Common myeloid progenitor, CD34-positive (primary cell): ENCODE measurements at regions of chr4 and their contacts with region 1.

Region 1: GRCh38 chr4:102610007-102610406 is 108.8 kb downstream of the NFKB1 start:
- DNase-seq: peak in 2 of 3 donors; percentile 36 to 40
- H3K4me3 ChIP-seq: no peak overlapping the region
- H3K27ac ChIP-seq: no peak overlapping the region
- H3K4me1 ChIP-seq: peaks cover 3 to 13% (median 6%) of the 10 kb centered on the region in 4 experiments
- H3K27me3 ChIP-seq: no peaks in the 10 kb centered on the region

Region 2: GRCh38 chr4:102335616-102336015 is 274.4 kb before region 1 on chr4:
- CTCF ChIA-PET with region 1: no interaction called
- POLR2A ChIA-PET with region 1: no interaction called
- DNase-seq: peak in 2 of 3 donors; percentile 31 to 40
- H3K4me3 ChIP-seq: no peak overlapping the region
- H3K27ac ChIP-seq: no peak overlapping the region
- H3K4me1 ChIP-seq: peaks cover under 1 to 12% (median 4%) of the 10 kb centered on the region in 4 experiments
- H3K27me3 ChIP-seq: no peaks in the 10 kb centered on the region

Region 3: GRCh38 chr4:102449751-102450352 is 160.2 kb before region 1 on chr4:
- CTCF ChIA-PET with region 1: interaction called, 34 read pairs
- POLR2A ChIA-PET with region 1: no interaction called
- DNase-seq: peak; percentile 70 to 86 (median 79)
- H3K4me3 ChIP-seq: no peak overlapping the region
- H3K27ac ChIP-seq: no peak overlapping the region
- H3K4me1 ChIP-seq: peaks cover 0 to 16% (median 5%) of the 10 kb centered on the region in 4 experiments
- H3K27me3 ChIP-seq: no peaks in the 10 kb centered on the region

Region 4: DNA sequence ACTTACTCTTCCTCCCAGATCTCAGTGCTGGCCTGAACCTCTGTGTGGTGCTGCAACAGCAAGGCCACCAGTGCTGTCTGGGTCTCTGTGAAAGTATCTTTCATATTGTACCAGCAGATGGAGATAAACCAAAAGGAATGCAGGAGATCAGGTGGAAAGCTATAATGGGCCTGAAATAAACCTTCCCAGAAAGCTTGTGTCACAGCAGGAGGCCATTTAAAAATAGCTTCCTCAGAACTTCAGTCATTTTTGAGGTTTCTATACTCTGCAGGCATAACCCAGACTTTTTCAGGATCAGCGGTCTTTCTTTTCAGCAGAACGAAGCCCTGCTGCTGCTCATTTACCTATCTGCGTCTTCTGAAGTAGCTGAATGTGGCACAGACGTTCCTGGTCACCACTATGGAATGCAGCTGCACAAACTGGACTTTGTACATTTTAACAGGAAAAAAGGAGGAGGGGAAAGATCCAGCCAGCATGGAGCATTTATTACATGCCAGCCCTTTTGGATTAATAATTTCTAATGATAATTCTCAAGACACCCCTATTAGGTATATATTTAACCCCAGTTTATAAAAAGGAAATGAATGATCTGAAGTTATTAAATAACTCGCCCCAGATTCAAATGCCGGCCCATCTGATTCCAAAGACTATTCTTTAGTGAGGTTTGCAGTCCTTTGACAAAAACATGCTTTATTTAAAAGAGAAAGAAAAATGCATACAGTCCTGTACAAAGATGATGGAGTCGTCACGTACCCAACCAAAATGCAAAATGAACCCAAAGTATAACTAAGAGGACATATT is 10.9 kb after region 1 on chr4:
- CTCF ChIA-PET with region 1: interaction called, 27 read pairs
- POLR2A ChIA-PET with region 1: no interaction called
- DNase-seq: peak; percentile 65 to 77 (median 77)
- H3K4me3 ChIP-seq: no peak overlapping the region
- H3K27ac ChIP-seq: no peak overlapping the region
- H3K4me1 ChIP-seq: peaks cover 0 to 9% (median 5%) of the 10 kb centered on the region in 4 experiments
- H3K27me3 ChIP-seq: no peaks in the 10 kb centered on the region